ENCODE measurements at regions of chr2 and their contacts with region 1.

Region 1: GRCh38 chr2:95022309-95023221 is 2.9 kb upstream of the MAL start:
- DNase-seq: peak; percentile 93
- H3K4me3 Mint-ChIP-seq: no peak overlapping the region
- H3K27ac Mint-ChIP-seq: peak overlapping the region; percentile 3
- H3K4me1 Mint-ChIP-seq: peaks cover 41% of the 10 kb centered on the region
- H3K27me3 Mint-ChIP-seq: no peaks in the 10 kb centered on the region

Region 2: GRCh38 chr2:94956797-94957391 is 65.7 kb before region 1 on chr2:
- CTCF ChIA-PET with region 1: no interaction called
- intact Hi-C with region 1: no loop called
- DNase-seq: peak; percentile 63
- H3K4me3 Mint-ChIP-seq: no peak overlapping the region
- H3K27ac Mint-ChIP-seq: no peak overlapping the region
- H3K4me1 Mint-ChIP-seq: no peaks in the 10 kb centered on the region
- H3K27me3 Mint-ChIP-seq: peaks cover 38% of the 10 kb centered on the region

Region 3: GRCh38 chr2:95034221-95034620 is 11.7 kb after region 1 on chr2:
- CTCF ChIA-PET with region 1: interaction called, 39 read pairs
- intact Hi-C with region 1: no loop called
- DNase-seq: peak; percentile 49
- H3K4me3 Mint-ChIP-seq: no peak overlapping the region
- H3K27ac Mint-ChIP-seq: peak overlapping the region; percentile 23
- H3K4me1 Mint-ChIP-seq: peaks cover 80% of the 10 kb centered on the region
- H3K27me3 Mint-ChIP-seq: no peaks in the 10 kb centered on the region

Region 4: GRCh38 chr2:95053543-95053942 is 31.0 kb after region 1 on chr2:
- CTCF ChIA-PET with region 1: interaction called, 137 read pairs
- intact Hi-C with region 1: loop called (anchors 1 kb)
- DNase-seq: peak; percentile 59
- H3K4me3 Mint-ChIP-seq: no peak overlapping the region
- H3K27ac Mint-ChIP-seq: no peak overlapping the region
- H3K4me1 Mint-ChIP-seq: peaks cover 81% of the 10 kb centered on the region
- H3K27me3 Mint-ChIP-seq: no peaks in the 10 kb centered on the region

Region 5: DNA sequence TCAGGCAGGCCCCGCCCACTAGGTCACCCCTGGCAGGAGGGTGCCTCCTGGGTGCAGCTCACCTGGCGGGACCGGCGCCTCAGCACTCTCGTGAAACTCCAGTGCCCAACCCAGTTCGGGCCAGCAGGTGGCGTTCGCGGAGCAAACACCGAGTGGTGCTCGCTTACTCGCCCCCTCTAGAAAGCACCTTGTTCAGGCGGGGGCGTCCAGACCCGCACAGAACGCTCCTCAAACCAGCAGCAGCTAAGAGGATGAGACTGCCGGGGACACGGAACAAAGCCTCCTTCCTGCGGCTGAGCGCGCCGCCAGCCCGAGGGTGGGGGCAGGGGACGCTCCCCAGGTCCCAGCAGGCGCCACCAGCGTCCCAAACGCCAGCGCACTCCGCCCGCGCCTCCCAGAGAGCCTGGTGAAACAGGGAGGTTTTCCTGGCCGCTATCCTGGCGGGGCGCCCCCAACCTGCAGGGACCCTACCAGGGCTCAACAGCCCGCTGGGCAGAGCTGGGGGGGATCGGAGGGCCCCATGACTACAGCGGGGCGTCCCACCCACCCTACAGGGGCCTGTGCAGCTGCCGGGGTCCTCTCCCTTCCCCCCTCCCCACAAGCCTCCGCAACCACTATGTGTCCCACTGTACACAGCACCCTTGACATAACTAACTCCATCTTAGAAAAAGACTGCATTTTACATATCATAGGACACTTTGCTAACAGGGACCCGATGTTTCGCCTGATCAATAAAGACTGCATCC is 54.4 kb after region 1 on chr2:
- CTCF ChIA-PET with region 1: interaction called, 416 read pairs
- intact Hi-C with region 1: loop called (anchors 1 kb)
- DNase-seq: peak; percentile 96
- H3K4me3 Mint-ChIP-seq: peak overlapping the region; percentile 73
- H3K27ac Mint-ChIP-seq: peak overlapping the region; percentile 82
- H3K4me1 Mint-ChIP-seq: peaks cover 61% of the 10 kb centered on the region
- H3K27me3 Mint-ChIP-seq: no peaks in the 10 kb centered on the region

Region 6: GRCh38 chr2:95115418-95115817 is 92.9 kb after region 1 on chr2:
- CTCF ChIA-PET with region 1: interaction called, 133 read pairs
- intact Hi-C with region 1: loop called (anchors 1 kb)
- DNase-seq: peak; percentile 88
- H3K4me3 Mint-ChIP-seq: no peak overlapping the region
- H3K27ac Mint-ChIP-seq: no peak overlapping the region
- H3K4me1 Mint-ChIP-seq: peaks cover 35% of the 10 kb centered on the region
- H3K27me3 Mint-ChIP-seq: no peaks in the 10 kb centered on the region

Region 7: DNA sequence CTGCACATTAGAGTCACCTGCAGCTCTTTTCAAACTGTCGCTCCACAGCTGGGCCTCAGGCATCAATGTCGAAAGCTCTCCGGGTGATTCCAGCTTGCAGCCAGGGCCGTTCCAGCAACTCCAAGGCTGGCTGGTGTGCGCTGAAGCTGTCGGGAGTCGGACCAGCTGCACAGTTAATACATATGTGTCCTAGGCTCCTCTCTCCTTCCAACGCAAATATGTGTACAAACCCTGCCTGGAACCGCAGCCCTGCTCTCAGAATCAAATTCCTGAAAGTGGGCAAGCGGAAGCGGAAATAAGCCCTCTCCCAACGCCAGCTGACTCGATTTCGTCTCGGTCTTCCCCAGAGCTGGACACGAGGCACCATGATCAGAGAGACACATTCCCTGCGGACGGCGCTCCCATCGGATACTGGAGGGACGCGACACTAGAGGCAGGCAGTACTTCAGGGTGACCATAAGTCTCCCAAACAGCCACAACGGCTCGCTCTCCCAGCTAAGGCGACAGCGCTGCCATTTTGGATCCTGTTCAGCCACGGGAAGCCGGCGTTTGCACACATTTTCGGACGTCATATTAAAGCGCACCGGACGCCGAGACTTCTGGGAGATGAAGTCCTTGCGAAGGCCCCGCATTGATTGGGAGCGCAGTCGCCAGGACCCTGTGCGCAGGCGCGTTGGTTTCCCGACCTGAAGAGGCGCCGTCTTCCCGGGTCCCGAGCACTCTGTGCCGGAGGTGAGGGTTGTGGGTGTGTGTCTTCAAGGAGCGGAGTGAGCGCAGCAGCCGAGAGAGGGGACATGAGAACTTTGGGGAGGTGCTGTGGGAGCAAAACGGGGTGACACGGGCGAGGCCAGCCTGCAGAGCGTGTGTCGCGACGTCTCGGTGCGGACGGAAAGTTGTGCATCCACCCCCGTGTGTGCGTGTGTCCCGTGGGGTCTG is 142.8 kb after region 1 on chr2 and contains the start of gene ZNF2:
- CTCF ChIA-PET with region 1: interaction called, 6 read pairs
- intact Hi-C with region 1: loop called (anchors 1 kb)
- DNase-seq: peak; percentile 99
- H3K4me3 Mint-ChIP-seq: peak within 1 kb of the TSS; percentile 99
- H3K27ac Mint-ChIP-seq: peak within 1 kb of the TSS; percentile 89
- H3K4me1 Mint-ChIP-seq: peaks cover 22% of the 10 kb centered on the region
- H3K27me3 Mint-ChIP-seq: no peaks in the 10 kb centered on the region
- total RNA-seq, gene ZNF2: 2.6 to 3.1 TPM

Region 8: GRCh38 chr2:95402370-95403203 is 380.0 kb after region 1 on chr2 and contains the start of gene FAHD2A:
- CTCF ChIA-PET with region 1: no interaction called
- intact Hi-C with region 1: loop called (anchors 5 kb)
- DNase-seq: peak; percentile 98
- H3K4me3 Mint-ChIP-seq: peak within 1 kb of the TSS; percentile 95
- H3K27ac Mint-ChIP-seq: peak within 1 kb of the TSS; percentile 86
- H3K4me1 Mint-ChIP-seq: peaks cover 18% of the 10 kb centered on the region
- H3K27me3 Mint-ChIP-seq: no peaks in the 10 kb centered on the region
- total RNA-seq, gene FAHD2A: 49.3 to 50.7 TPM